Brain microvascular endothelial cell (primary cell): ENCODE measurements at regions of chr10 and their contacts with region 1.

Region 1: DNA sequence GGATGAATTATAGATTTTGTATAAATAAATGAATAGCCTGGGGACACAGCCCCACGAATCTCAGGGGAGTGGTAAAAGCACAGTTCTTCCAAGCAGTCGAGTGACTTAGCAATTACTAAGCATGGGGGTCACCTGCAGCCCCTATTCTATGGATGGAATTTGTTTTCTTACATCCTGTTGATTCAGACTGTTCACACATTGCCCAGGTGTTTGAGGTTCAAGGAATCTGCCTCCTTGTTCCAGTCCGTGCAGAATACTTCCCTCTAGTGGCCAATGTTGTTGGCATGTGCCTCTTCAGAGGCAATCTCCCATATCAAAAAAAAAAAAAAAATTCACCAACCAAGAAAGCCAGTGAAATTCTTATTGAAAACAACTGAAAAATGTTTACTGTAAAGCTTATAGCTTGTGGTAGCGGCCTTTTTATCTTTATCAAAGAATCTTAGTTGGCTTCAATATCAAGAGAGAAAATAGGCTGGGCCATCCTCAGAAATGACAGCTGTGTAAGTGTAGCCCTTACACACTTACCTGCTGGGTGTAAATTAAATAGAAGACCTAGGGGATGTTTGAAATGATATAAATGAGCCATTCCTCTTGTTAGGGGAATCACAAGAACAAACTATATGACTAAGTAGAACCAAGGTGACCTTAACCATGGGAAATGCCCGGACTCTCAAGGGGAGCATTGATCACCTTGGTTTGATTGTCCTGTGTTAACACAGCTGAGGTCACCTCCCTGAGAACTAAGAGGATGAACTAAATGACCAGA is 7.8 kb downstream of the LIPM start:
- DNase-seq: peak; percentile 43
- H3K4me3 ChIP-seq: no peak overlapping the region
- H3K27ac ChIP-seq: no peak overlapping the region
- H3K27me3 ChIP-seq: peaks cover 1% of the 10 kb centered on the region
- CTCF ChIP-seq: peak; percentile 89

Region 2: GRCh38 chr10:88687853-88688467 is 122.4 kb before region 1 on chr10:
- in situ Hi-C with region 1: loop called (anchors 25 kb)
- DNase-seq: no peak
- H3K4me3 ChIP-seq: no peak overlapping the region
- H3K27ac ChIP-seq: no peak overlapping the region
- H3K27me3 ChIP-seq: no peaks in the 10 kb centered on the region
- CTCF ChIP-seq: peak; percentile 69